Activated CD4-positive, alpha-beta memory T cell treated with anti-CD3 and anti-CD28 coated beads, Interleukin-2, amount 10 ng/mL, durations not matched to agents 7 days and 5 days (primary cell): ENCODE measurements at regions of chr22 and their contacts with region 1.

Region 1: DNA sequence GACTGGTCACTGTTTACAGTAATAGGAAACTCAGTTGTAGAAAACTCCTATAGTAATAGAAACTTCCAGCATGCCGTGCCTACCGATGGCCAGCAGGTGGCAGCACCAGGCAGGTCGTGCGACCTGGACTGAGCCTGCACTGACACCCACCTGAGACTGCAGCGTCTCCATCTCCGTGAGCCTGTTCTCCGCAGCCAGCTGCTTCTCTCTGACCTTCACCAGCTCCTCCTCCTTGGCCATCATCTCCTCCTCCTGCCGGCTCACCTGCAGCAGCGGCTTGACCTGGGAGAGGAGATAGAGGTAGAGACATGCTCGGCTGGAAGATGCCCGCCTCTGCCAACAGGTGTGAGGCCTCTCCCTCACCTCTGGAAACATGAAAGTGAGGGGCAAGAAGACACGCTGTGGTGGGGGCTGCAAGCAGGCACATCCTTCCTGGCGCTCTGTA is 48.5 kb downstream of the APOL1 start:
- DNase-seq: peak; percentile 84
- H3K4me3 Mint-ChIP-seq: no peak overlapping the region
- H3K27ac Mint-ChIP-seq: peak overlapping the region; percentile 54
- H3K4me1 Mint-ChIP-seq: peaks cover 16% of the 10 kb centered on the region
- H3K27me3 Mint-ChIP-seq: no peaks in the 10 kb centered on the region

Region 2: GRCh38 chr22:36036167-36036624 is 265.2 kb before region 1 on chr22:
- CTCF ChIA-PET with region 1: no interaction called
- POLR2A ChIA-PET with region 1: no interaction called
- DNase-seq: no peak
- H3K4me3 Mint-ChIP-seq: no peak overlapping the region
- H3K27ac Mint-ChIP-seq: no peak overlapping the region
- H3K4me1 Mint-ChIP-seq: no peaks in the 10 kb centered on the region
- H3K27me3 Mint-ChIP-seq: peaks cover 42% of the 10 kb centered on the region

Region 3: GRCh38 chr22:36315325-36315724 is 13.9 kb after region 1 on chr22:
- CTCF ChIA-PET with region 1: interaction called, 11 read pairs
- POLR2A ChIA-PET with region 1: interaction called, 4 read pairs
- DNase-seq: no peak
- H3K4me3 Mint-ChIP-seq: no peak overlapping the region
- H3K27ac Mint-ChIP-seq: peak overlapping the region; percentile 2
- H3K4me1 Mint-ChIP-seq: no peaks in the 10 kb centered on the region
- H3K27me3 Mint-ChIP-seq: no peaks in the 10 kb centered on the region

Region 4: DNA sequence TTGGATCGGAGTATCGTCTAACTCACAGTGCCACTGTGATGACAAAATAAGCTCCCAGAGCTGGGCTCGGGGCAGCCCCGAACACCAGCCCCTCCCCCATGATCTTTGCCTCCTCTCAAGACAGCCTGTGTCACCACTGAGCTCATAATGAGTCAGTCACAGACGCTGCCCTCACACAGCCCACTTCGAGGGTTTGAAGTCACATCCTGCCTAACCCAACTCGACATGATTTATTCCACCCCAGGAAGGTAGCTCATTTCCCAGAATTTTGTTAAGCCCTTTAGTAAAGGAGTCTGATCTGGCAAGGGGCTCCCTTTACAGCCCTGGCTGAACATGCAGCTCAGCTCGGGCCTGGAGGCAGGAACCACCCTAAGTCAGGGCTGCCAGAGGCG is 63.6 kb after region 1 on chr22:
- CTCF ChIA-PET with region 1: interaction called, 10 read pairs
- POLR2A ChIA-PET with region 1: interaction called, 6 read pairs
- DNase-seq: peak; percentile 90
- H3K4me3 Mint-ChIP-seq: peak overlapping the region; percentile 51
- H3K27ac Mint-ChIP-seq: peak overlapping the region; percentile 85
- H3K4me1 Mint-ChIP-seq: peaks cover 97% of the 10 kb centered on the region
- H3K27me3 Mint-ChIP-seq: no peaks in the 10 kb centered on the region